CD4-positive, alpha-beta memory T cell (primary cell): ENCODE measurements at regions of chr1 and their contacts with region 1.

Region 1: DNA sequence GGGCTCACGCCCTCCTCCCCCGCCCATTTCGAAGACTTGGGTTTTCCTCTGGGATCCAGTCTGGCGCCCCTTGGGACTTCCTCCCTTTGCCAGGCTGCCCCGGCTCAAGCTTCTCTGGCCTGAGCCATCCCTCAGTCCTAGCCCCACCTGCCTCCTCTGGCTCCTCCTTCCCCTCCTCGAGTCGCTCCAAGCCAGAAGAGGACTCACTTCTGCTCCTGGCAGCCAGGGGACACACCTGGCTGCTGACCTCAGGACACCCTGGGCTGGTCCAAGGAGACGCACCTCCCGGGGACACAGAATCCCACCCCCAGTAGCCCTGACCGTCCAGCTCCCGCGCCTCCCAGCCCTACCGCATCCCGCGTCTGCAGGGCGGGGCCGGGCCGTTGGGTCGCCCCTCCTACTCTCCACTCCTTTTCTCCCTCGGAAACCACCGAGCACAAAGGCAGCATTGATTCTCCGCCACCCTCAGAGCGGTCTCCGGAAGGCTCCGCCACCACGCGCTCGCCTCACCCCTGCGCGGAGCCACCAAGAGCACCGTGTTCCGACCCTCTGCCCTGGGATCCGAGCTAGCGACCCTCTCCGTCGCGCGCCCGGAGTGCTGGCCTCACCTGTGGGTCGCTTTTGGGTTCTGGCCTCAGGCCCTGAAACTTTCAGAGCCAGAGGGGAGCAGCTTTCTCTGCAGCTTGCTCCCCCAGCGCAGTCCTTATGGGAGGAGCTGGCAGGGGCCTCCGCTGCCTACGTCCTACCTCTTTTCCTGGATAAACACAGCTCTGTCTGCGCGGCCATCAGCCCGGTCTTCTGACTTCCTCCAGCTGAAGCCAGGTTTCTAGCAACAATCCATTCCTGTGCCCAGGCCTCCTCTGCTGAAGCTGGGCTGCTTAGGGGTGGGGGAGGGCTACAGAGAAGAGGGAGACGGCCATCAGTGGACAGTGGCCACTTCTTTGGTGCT is at the start of gene C2CD4D:
- DNase-seq: peak; percentile 75 to 87 (median 79)
- H3K4me3 ChIP-seq: peak within 1 kb of the TSS; percentile 52 to 83
- H3K4me3 Mint-ChIP-seq: peak within 1 kb of the TSS; percentile 84 to 93 (median 88)
- H3K27ac ChIP-seq: peak within 1 kb of the TSS; percentile 75
- H3K27ac Mint-ChIP-seq: peak within 1 kb of the TSS; percentile 82 to 98 (median 94)
- H3K4me1 ChIP-seq: peaks cover 54% of the 10 kb centered on the region
- H3K4me1 Mint-ChIP-seq: peaks cover 27 to 66% (median 52%) of the 10 kb centered on the region in 4 donors
- H3K27me3 ChIP-seq: no peaks in the 10 kb centered on the region
- H3K27me3 Mint-ChIP-seq: no peaks in the 10 kb centered on the region
- total RNA-seq, gene C2CD4D: 1.0 to 1.7 TPM

Region 2: GRCh38 chr1:151534665-151535278 is 305.0 kb before region 1 on chr1:
- CTCF ChIA-PET with region 1: interaction called, 7 read pairs
- POLR2A ChIA-PET with region 1: interaction called, 4 read pairs
- intact Hi-C with region 1: loop called (anchors 1 kb)
- DNase-seq: peak; percentile 63 to 70 (median 65)
- H3K4me3 ChIP-seq: no peak overlapping the region
- H3K4me3 Mint-ChIP-seq: no peak overlapping the region
- H3K27ac ChIP-seq: no peak overlapping the region
- H3K27ac Mint-ChIP-seq: peak overlapping the region in 1 of 7 donors; percentile 12
- H3K4me1 ChIP-seq: peaks cover 7% of the 10 kb centered on the region
- H3K4me1 Mint-ChIP-seq: peaks cover 0 to 6% (median 4%) of the 10 kb centered on the region in 4 donors
- H3K27me3 ChIP-seq: no peaks in the 10 kb centered on the region
- H3K27me3 Mint-ChIP-seq: peaks cover 2 to 3% of the 10 kb centered on the region in 2 donors

Region 3: DNA sequence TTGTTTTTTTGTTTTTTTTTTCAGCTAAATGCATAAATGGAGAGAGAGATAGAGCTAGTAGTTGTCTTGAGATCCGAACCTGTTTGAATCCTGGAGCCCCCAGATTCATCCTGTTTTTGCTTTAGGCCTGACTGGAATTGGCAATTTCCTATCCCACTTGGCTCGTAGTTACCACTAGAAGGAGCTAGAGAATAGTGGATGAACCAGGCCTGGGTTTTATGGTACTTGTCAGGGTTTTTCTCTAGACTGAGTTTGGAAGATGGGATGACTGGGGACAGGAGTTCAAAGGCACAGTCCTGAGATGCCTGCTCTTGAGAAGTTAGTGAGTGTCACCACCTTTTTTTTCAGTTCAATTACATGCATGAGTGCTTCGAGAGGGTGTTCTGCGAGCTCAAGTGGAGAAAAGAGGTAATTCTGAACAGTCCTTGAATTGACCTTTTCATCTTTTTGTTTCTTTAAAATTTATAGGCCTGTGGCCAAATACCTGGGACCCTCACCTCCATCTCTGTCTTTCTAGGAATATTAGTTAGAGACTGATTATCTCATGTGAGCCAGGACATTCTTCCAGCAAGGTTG is 146.6 kb before region 1 on chr1:
- CTCF ChIA-PET with region 1: interaction called, 3 read pairs
- POLR2A ChIA-PET with region 1: no interaction called
- intact Hi-C with region 1: loop called (anchors 5 kb)
- DNase-seq: peak in 1 of 5 donors; percentile 8
- H3K4me3 ChIP-seq: no peak overlapping the region
- H3K4me3 Mint-ChIP-seq: no peak overlapping the region
- H3K27ac ChIP-seq: no peak overlapping the region
- H3K27ac Mint-ChIP-seq: peak overlapping the region in 1 of 7 donors; percentile 17
- H3K4me1 ChIP-seq: no peaks in the 10 kb centered on the region
- H3K4me1 Mint-ChIP-seq: peaks cover 0 to 7% (median 4%) of the 10 kb centered on the region in 4 donors
- H3K27me3 ChIP-seq: no peaks in the 10 kb centered on the region
- H3K27me3 Mint-ChIP-seq: no peaks in the 10 kb centered on the region

Region 4: DNA sequence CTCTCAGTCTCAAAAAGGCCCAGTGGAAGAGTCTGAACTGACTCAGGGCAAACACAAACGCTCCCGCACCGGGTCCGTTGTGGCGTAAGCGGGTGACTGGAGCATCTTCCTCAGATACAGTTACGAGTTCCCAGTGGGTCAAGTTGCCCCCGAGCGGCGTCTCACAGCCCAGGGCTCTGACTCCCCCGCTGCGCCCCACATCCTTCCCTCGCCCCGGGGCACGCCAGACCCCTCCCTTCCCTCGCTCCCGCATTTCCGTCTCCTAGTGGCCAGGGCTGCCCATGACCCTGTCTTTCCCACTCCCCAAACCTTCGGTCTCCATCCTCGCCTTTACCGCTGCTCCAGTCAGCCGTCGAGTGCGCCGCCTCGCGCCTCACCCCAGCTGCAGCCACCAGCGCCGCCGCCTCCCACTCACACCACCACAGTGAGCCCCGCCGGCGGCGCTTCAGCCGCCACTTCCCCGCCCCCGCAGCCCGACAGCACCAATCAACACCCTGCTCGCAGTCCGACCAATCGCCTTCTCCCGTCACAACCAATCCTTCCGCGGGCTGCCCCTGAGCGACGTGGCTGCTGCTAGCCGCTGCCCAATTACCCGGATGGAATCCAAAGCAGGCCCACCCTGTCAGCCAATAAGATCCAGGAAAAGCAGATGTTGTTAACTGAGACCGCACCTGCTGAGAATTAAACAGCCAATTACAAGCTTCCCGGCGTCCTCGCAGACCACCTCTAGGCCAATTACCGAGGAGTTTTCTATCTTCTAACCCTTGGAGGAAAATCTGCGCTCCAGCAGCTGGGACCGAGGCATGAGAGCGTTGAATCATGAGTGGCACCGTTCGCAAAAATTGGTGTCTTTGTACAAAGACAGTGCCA is 49.4 kb before region 1 on chr1 and contains the start of gene TDRKH:
- CTCF ChIA-PET with region 1: interaction called, 15 read pairs
- POLR2A ChIA-PET with region 1: interaction called, 11 read pairs
- intact Hi-C with region 1: loop called (anchors 1 kb)
- DNase-seq: peak; percentile 98 to 100 (median 99)
- H3K4me3 ChIP-seq: peak within 1 kb of the TSS; percentile 86 to 100
- H3K4me3 Mint-ChIP-seq: peak within 1 kb of the TSS; percentile 91 to 99 (median 96)
- H3K27ac ChIP-seq: peak within 1 kb of the TSS; percentile 51
- H3K27ac Mint-ChIP-seq: peak within 1 kb of the TSS; percentile 85 to 98 (median 90)
- H3K4me1 ChIP-seq: peaks cover 29% of the 10 kb centered on the region
- H3K4me1 Mint-ChIP-seq: peaks cover 21 to 41% (median 34%) of the 10 kb centered on the region in 4 donors
- H3K27me3 ChIP-seq: no peaks in the 10 kb centered on the region
- H3K27me3 Mint-ChIP-seq: no peaks in the 10 kb centered on the region
- total RNA-seq, gene TDRKH: 29.1 to 29.3 TPM

Region 5: DNA sequence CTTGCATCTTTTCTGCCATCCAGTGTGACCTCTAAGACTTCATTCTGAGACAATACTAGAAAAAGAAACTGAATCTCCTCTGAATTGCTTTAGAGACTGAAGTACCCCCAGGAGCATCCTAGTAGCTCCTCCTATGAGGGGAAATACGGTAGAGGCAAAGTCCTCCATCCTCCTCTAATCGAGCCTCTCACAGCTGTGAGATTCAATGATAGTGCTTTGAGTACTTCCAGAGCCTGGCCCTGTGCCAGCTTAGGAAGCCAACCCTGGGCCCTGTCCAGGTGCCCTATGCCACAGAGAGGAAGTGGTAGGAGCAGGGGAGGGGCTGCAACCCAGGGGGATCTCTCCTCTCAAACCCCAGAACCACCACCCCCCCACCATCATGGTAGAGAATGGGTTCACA is 18.8 kb before region 1 on chr1:
- CTCF ChIA-PET with region 1: interaction called, 37 read pairs
- POLR2A ChIA-PET with region 1: interaction called, 233 read pairs
- intact Hi-C with region 1: no loop called
- DNase-seq: peak in 4 of 5 donors; percentile 30 to 63 (median 35)
- H3K4me3 ChIP-seq: no peak overlapping the region
- H3K4me3 Mint-ChIP-seq: peak overlapping the region; percentile 14 to 89 (median 79)
- H3K27ac ChIP-seq: peak overlapping the region; percentile 43
- H3K27ac Mint-ChIP-seq: peak overlapping the region; percentile 88 to 95 (median 90)
- H3K4me1 ChIP-seq: peaks cover 81% of the 10 kb centered on the region
- H3K4me1 Mint-ChIP-seq: peaks cover 53 to 98% (median 69%) of the 10 kb centered on the region in 4 donors
- H3K27me3 ChIP-seq: no peaks in the 10 kb centered on the region
- H3K27me3 Mint-ChIP-seq: no peaks in the 10 kb centered on the region

Region 6: GRCh38 chr1:151993654-151994496 is 154.1 kb after region 1 on chr1 and contains the start of gene S100A10:
- CTCF ChIA-PET with region 1: no interaction called
- POLR2A ChIA-PET with region 1: interaction called, 3 read pairs
- intact Hi-C with region 1: loop called (anchors 2 kb)
- DNase-seq: peak; percentile 83 to 87 (median 86)
- H3K4me3 ChIP-seq: peak within 1 kb of the TSS; percentile 55 to 88
- H3K4me3 Mint-ChIP-seq: peak within 1 kb of the TSS; percentile 95 to 99 (median 98)
- H3K27ac ChIP-seq: peak within 1 kb of the TSS; percentile 92
- H3K27ac Mint-ChIP-seq: peak within 1 kb of the TSS; percentile 97 to 99 (median 98)
- H3K4me1 ChIP-seq: peaks cover 54% of the 10 kb centered on the region
- H3K4me1 Mint-ChIP-seq: peaks cover 38 to 61% (median 46%) of the 10 kb centered on the region in 4 donors
- H3K27me3 ChIP-seq: no peaks in the 10 kb centered on the region
- H3K27me3 Mint-ChIP-seq: no peaks in the 10 kb centered on the region
- total RNA-seq, gene S100A10: 218 to 231 TPM